Body of pancreas (tissue), 4 donors: ENCODE measurements at regions of chr20 and their contacts with region 1.

Region 1: DNA sequence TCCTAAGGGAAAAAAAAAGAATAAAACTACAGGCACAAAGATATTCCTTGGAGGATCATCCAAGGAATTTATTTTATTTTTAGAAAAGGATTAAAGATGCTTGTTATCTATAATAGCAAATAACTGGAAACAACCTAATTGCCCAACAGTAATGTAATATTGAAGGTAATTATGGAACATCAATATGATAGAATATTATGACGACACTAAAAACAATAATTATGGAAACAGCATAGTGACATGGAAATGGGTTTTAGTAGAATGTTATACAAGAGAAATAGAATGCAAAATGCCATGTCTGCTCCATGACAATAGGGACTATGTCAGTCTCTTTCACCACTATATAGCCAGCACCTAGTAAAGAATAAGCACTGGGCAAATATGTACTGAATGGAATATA is 51.8 kb upstream of the CBLN4 start:
- DNase-seq: no peak
- ATAC-seq: no peak
- H3K4me3 ChIP-seq: no peak overlapping the region
- H3K27ac ChIP-seq: no peak overlapping the region
- H3K4me1 ChIP-seq: no peaks in the 10 kb centered on the region
- H3K27me3 ChIP-seq: no peaks in the 10 kb centered on the region
- CTCF ChIP-seq: no peak
- POLR2A ChIP-seq: no peak

Region 2: DNA sequence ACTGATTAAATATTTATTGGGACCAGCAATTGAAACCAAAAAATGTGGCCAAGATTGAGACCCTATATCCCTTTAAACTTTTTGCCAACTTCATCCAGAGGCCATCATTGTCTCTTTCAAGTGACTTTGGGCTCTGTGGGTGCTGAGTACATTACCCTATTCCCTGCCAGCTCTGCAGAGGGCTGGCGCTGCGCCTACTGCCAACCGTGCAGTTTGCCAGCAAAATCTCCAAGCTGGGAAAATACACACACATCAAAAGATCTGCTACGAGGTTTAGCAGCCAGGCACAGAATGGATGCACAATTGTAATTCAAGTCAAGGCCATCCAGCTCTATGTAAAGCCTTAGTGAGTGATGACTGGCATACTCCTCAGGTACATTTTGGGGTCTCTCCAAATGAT is 176.8 kb before region 1 on chr20:
- intact Hi-C with region 1: no loop called
- DNase-seq: peak in 2 of 4 donors; percentile 13 to 23
- ATAC-seq: no peak
- H3K4me3 ChIP-seq: no peak overlapping the region
- H3K27ac ChIP-seq: no peak overlapping the region
- H3K4me1 ChIP-seq: no peaks in the 10 kb centered on the region
- H3K27me3 ChIP-seq: no peaks in the 10 kb centered on the region
- CTCF ChIP-seq: no peak
- POLR2A ChIP-seq: no peak

Region 3: GRCh38 chr20:56111961-56112730 is 55.0 kb after region 1 on chr20:
- intact Hi-C with region 1: loop called (anchors 10 kb)
- DNase-seq: no peak
- ATAC-seq: no peak
- H3K4me3 ChIP-seq: no peak overlapping the region
- H3K27ac ChIP-seq: no peak overlapping the region
- H3K4me1 ChIP-seq: no peaks in the 10 kb centered on the region
- H3K27me3 ChIP-seq: no peaks in the 10 kb centered on the region
- CTCF ChIP-seq: no peak
- POLR2A ChIP-seq: no peak